Activated CD4-positive, alpha-beta T cell treated with anti-CD3 and anti-CD28 coated beads for 36 hours (primary cell): ENCODE measurements at regions of chr17 and their contacts with region 1.

Region 1: GRCh38 chr17:55576996-55577586 is 65.8 kb upstream of the SMIM36 start:
- DNase-seq: peak; percentile 87
- ATAC-seq: peak; percentile 90
- H3K4me3 Mint-ChIP-seq: no peak overlapping the region
- H3K27ac Mint-ChIP-seq: no peak overlapping the region
- H3K4me1 Mint-ChIP-seq: peaks cover 21% of the 10 kb centered on the region
- H3K27me3 Mint-ChIP-seq: peaks cover 8% of the 10 kb centered on the region

Region 2: DNA sequence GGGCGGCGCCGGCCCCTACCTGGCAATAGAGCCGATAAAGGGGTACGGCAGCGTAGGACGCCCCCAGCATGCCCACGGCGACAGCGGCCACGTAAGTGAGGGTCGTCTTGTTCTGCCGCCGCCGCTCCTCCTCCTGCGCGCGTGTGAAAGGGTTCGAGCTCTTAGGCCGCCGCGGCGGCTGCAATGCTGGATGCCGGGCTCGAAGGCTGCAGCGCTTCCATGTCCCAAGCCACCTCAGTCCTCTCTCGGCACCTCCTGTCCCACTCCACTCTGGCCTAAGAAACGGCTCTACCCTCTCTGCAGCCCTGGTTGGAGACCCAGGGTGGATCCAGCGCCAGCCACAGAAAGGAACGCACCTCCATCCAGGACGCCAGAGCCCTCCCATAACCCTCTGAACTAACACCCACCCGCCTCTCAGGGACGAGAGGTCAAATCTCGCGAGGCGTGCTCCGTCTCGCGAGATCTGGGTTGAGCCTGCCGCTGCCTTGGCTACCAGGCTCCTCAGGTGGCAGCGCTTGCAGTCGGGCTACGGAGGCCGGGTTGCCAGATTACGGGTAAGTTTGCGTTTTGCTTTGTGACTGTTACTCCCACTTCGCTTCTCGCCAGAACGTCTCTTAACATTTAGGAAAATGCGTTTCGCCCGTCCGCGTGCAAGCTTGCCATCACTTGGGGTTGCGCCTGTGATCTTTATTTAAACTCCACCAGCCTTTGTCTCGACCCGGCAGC is 608.7 kb before region 1 on chr17 and contains the starts of genes COX11 and STXBP4:
- CTCF ChIA-PET with region 1: no interaction called
- POLR2A ChIA-PET with region 1: no interaction called
- intact Hi-C with region 1: loop called in 1 of 2 experiments (anchors 10 kb)
- DNase-seq: peak; percentile 96
- ATAC-seq: peak; percentile 97
- H3K4me3 Mint-ChIP-seq: no peak within 1 kb of the TSS
- H3K27ac Mint-ChIP-seq: peak within 1 kb of the TSS; percentile 48
- H3K4me1 Mint-ChIP-seq: peaks cover 23% of the 10 kb centered on the region
- H3K27me3 Mint-ChIP-seq: no peaks in the 10 kb centered on the region
- total RNA-seq, gene COX11: 42.6 to 45.4 TPM
- total RNA-seq, gene STXBP4: 5.4 to 7.2 TPM

Region 3: DNA sequence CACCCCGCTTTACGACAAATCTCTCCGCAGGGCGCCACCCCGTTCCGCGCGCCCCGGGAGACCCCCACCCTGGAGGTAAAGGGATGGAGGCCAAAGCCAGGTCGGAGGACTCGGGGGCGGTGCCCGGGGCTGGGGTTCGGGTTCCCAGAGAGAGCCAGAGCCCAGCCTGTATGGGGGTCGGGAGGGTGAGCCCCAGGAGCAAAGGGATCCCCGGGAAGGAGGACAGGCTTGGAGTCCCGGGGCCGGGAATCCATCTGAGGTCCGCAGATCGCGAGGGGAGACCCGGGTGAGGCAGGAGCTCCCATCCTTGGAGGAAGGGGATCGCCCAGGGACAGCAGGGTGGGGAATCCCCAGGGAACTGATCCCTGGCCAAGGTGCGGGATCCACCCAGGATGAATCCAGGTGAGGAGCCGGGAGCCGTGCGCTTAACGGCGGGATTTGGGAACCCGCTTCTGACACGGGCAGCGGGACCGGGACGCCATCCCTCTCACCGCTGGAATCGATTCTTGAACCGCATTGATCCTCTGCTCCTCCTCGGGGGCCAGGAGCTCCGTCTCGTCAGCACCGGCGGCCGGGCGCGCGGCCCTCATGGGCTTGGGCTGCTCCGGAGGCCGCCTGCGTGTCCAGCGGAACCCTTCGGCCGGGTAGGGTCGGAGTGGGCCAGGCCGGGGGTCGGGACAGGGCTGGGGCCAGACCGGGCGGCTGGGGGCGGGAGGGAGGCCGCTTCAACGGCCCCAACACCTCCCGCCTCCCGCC is 155.7 kb before region 1 on chr17 and contains the start of gene MMD:
- CTCF ChIA-PET with region 1: no interaction called
- POLR2A ChIA-PET with region 1: interaction called, 3 read pairs
- intact Hi-C with region 1: loop called (anchors 2 to 5 kb)
- DNase-seq: no peak
- ATAC-seq: peak; percentile 22
- H3K4me3 Mint-ChIP-seq: peak within 1 kb of the TSS; percentile 86
- H3K27ac Mint-ChIP-seq: peak within 1 kb of the TSS; percentile 89
- H3K4me1 Mint-ChIP-seq: peaks cover 44% of the 10 kb centered on the region
- H3K27me3 Mint-ChIP-seq: peaks cover 22% of the 10 kb centered on the region
- total RNA-seq, gene MMD: 17.4 to 19.6 TPM

Region 4: GRCh38 chr17:55444471-55445441 is 132.3 kb before region 1 on chr17:
- CTCF ChIA-PET with region 1: no interaction called
- POLR2A ChIA-PET with region 1: no interaction called
- intact Hi-C with region 1: no loop called
- DNase-seq: no peak
- ATAC-seq: no peak
- H3K4me3 Mint-ChIP-seq: no peak overlapping the region
- H3K27ac Mint-ChIP-seq: no peak overlapping the region
- H3K4me1 Mint-ChIP-seq: no peaks in the 10 kb centered on the region
- H3K27me3 Mint-ChIP-seq: peaks cover 8% of the 10 kb centered on the region

Region 5: GRCh38 chr17:55527540-55528118 is 49.5 kb before region 1 on chr17:
- CTCF ChIA-PET with region 1: interaction called, 12 read pairs
- POLR2A ChIA-PET with region 1: no interaction called
- intact Hi-C with region 1: loop called in 1 of 2 experiments (anchors 1 kb)
- DNase-seq: peak; percentile 48
- ATAC-seq: no peak
- H3K4me3 Mint-ChIP-seq: no peak overlapping the region
- H3K27ac Mint-ChIP-seq: no peak overlapping the region
- H3K4me1 Mint-ChIP-seq: peaks cover 5% of the 10 kb centered on the region
- H3K27me3 Mint-ChIP-seq: peaks cover 20% of the 10 kb centered on the region

Region 6: DNA sequence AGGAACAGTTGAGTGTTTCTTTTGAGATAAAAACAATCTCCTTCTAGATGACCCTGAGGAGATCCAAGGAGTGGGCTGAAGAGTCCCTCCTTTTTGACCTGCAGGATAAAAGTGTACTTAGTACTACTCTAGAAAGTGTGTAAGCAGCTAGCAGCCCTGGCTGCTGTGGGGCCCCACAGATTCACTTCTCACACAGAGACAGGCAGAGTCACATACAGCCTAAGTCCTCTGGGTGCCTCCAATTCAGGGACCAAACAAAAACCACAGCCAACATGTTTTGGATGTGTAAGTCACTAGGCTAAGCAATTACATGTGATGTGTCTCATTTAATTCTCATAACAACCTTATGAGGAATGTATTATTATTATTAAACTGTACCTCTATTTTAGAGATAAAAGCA is 48.4 kb after region 1 on chr17:
- CTCF ChIA-PET with region 1: no interaction called
- POLR2A ChIA-PET with region 1: interaction called, 3 read pairs
- intact Hi-C with region 1: loop called in 1 of 2 experiments (anchors 2 kb)
- DNase-seq: peak; percentile 47
- ATAC-seq: peak; percentile 84
- H3K4me3 Mint-ChIP-seq: no peak overlapping the region
- H3K27ac Mint-ChIP-seq: no peak overlapping the region
- H3K4me1 Mint-ChIP-seq: peaks cover 16% of the 10 kb centered on the region
- H3K27me3 Mint-ChIP-seq: peaks cover 32% of the 10 kb centered on the region

Region 7: DNA sequence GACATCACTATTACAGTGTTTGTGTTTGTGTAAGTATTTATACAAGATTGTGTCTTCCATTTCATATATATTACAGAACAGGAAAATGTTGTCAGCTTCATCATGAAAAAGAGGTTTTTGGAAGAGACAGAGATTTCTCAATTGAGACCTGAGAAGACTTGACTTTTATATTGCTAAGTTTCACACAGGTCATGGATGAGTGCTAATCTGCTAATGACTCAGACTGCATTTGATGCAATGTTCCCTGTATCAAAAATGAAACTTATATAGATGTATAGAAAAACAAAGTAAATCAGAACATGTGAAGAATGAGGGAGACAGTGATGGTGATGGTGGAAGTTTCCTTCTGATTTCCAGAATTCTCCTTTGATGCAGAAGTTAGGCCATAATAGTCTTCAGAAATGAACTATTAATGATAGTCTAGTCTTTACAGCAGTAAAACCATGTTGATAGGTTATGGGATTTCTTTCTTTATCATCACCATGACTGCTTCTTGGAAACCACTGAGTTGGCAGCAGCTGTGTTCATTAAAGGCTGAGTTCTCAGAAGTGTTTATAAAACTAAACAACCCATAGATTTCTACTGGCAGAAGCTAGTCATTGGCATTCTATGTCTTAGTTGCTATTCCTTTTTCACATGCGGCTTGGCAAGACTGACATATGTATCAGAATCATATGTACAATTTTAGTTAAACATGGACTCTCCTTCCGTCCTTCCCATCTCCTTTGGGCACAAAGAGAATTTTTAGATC is 229.8 kb after region 1 on chr17:
- CTCF ChIA-PET with region 1: no interaction called
- POLR2A ChIA-PET with region 1: no interaction called
- intact Hi-C with region 1: loop called (anchors 1 kb)
- DNase-seq: peak; percentile 44
- ATAC-seq: peak; percentile 90
- H3K4me3 Mint-ChIP-seq: no peak overlapping the region
- H3K27ac Mint-ChIP-seq: peak overlapping the region; percentile 80
- H3K4me1 Mint-ChIP-seq: peaks cover 13% of the 10 kb centered on the region
- H3K27me3 Mint-ChIP-seq: peaks cover 5% of the 10 kb centered on the region